ENCODE measurements at regions of chr17 and their contacts with region 1.

Region 1: GRCh38 chr17:29279397-29280070 is 14.4 kb downstream of the NUFIP2 start:
- DNase-seq: no peak
- ATAC-seq: no peak
- H3K4me3 Mint-ChIP-seq: no peak overlapping the region
- H3K27ac Mint-ChIP-seq: no peak overlapping the region
- H3K4me1 Mint-ChIP-seq: peaks cover 36% of the 10 kb centered on the region
- H3K27me3 Mint-ChIP-seq: no peaks in the 10 kb centered on the region

Region 2: DNA sequence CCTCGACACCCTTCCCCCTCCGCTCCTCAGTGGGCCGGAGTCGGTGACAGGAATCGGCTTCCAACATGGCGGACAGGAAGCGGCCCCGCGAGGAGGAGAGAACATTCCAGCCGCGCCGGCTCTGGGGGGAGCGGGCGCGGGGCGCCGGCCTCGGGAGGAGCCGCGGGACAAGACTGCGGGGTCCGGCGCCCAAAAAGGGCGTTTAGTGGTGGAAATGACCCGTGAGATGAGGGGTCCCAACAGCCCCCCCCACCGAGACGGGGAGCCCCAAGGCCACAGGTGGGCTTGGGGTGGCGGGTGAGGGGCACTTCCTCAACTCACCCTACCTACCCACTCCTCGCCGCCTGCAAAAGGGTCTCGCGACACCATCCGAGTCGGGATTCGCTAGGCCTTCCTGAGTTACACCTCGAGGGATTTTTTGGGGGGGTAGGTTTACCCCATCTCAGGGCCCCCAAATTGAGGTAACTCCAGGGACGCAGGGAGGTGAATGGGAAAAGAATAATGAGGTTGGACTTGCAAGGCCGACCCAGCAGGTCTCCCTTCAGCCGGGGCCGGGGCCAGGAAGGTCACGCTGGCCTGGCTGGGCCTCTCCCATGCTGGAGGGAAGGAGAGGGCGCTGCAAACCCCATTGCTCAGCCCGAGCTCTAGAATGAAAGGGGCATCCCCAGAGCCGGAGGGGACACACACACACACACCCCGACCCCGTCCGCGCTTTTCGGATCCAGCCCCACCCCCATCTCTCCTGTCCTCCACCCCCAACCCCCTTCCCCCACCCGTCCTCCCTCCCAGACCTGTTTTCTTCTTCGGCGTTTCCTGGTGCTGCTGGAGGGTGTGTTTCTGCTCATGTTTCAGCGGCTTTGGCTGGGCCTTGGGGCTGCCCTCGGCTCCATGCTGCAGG is 13.7 kb after region 1 on chr17:
- CTCF ChIA-PET with region 1: interaction called, 15 read pairs
- DNase-seq: peak; percentile 79
- ATAC-seq: peak; percentile 32
- H3K4me3 Mint-ChIP-seq: peak overlapping the region; percentile 98
- H3K27ac Mint-ChIP-seq: peak overlapping the region; percentile 98
- H3K4me1 Mint-ChIP-seq: peaks cover 41% of the 10 kb centered on the region
- H3K27me3 Mint-ChIP-seq: no peaks in the 10 kb centered on the region